ENCODE measurements at regions of chr14 and their contacts with region 1.

Region 1: GRCh38 chr14:92585981-92586937 is 72.7 kb downstream of the RIN3 start:
- DNase-seq: peak; percentile 54
- H3K4me3 Mint-ChIP-seq: peak overlapping the region; percentile 55
- H3K27ac Mint-ChIP-seq: peak overlapping the region; percentile 93
- H3K4me1 Mint-ChIP-seq: peaks cover 87% of the 10 kb centered on the region
- H3K27me3 Mint-ChIP-seq: peaks cover 14% of the 10 kb centered on the region

Region 2: GRCh38 chr14:92551044-92551841 is 35.0 kb before region 1 on chr14:
- CTCF ChIA-PET with region 1: interaction called, 13 read pairs
- POLR2A ChIA-PET with region 1: interaction called, 7 read pairs
- DNase-seq: peak; percentile 33
- H3K4me3 Mint-ChIP-seq: no peak overlapping the region
- H3K27ac Mint-ChIP-seq: no peak overlapping the region
- H3K4me1 Mint-ChIP-seq: peaks cover 32% of the 10 kb centered on the region
- H3K27me3 Mint-ChIP-seq: peaks cover 24% of the 10 kb centered on the region

Region 3: DNA sequence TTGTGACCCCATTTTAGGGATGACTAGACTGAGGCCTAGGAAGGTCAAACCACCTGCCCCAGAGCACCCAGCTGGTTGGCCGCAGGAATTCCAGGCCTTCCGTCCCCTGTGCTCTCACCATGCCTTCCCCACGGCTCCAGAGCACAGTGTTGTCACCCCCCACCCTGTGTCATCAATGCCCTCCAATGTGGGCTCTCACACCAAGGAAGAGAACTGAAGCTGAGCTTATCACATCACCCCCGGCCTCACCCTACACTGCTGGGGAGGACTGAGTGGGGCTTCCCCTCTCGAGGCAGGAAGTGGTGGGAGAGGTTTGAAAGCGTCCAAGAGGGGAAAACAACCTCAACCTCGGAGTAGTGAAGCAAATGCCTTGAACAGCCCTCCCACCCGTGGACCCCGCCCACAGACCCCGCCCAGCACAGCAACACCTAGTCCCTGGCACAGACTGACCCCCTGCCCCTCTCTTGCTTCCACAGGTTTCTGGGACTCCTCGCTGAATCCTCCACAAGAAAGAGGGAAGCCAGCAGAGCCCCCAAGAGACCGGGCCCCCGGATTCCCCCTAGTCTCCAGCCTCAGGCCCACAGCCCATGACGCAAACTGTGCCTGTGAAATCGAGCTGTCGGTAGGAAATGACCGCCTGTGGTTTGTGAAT is 65.0 kb after region 1 on chr14:
- CTCF ChIA-PET with region 1: interaction called, 3 read pairs
- POLR2A ChIA-PET with region 1: interaction called, 15 read pairs
- DNase-seq: peak; percentile 87
- H3K4me3 Mint-ChIP-seq: peak overlapping the region; percentile 96
- H3K27ac Mint-ChIP-seq: peak overlapping the region; percentile 92
- H3K4me1 Mint-ChIP-seq: peaks cover 85% of the 10 kb centered on the region
- H3K27me3 Mint-ChIP-seq: no peaks in the 10 kb centered on the region